Lower leg skin (tissue), 4 donors: ENCODE measurements at regions of chr17 and their contacts with region 1.

Region 1: GRCh38 chr17:68771867-68772515 is 170.8 kb upstream of the FAM20A start:
- DNase-seq: no peak
- H3K4me3 ChIP-seq: no peak overlapping the region
- CTCF ChIP-seq: no peak
- POLR2A ChIP-seq: no peak

Region 2: DNA sequence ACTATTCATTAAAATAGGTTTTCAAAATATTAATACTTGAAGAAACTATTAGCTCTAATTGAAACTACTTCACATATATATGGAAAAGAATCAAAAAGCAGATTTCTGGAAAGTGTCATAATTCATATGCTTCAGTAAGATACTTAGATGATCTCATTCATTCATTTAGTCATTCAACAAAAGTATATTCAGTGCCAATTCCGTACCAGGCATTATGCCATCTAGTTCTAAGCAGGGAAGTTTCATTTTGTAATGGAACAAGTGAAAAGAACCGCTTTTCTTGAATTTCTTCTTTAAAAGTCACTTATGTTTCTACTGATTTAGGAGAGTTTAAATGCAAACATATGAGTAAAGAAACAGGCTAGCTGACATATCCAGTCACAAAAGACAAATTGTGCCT is 52.6 kb before region 1 on chr17:
- intact Hi-C with region 1: no loop called
- DNase-seq: no peak
- H3K4me3 ChIP-seq: no peak overlapping the region
- CTCF ChIP-seq: no peak
- POLR2A ChIP-seq: no peak

Region 3: GRCh38 chr17:68972119-68972704 is 200.2 kb after region 1 on chr17:
- intact Hi-C with region 1: loop called (anchors 10 kb)
- DNase-seq: no peak
- H3K4me3 ChIP-seq: no peak overlapping the region
- CTCF ChIP-seq: no peak
- POLR2A ChIP-seq: no peak